Panc1 (cell line): ENCODE measurements at regions of chr4 and their contacts with region 1.

Region 1: DNA sequence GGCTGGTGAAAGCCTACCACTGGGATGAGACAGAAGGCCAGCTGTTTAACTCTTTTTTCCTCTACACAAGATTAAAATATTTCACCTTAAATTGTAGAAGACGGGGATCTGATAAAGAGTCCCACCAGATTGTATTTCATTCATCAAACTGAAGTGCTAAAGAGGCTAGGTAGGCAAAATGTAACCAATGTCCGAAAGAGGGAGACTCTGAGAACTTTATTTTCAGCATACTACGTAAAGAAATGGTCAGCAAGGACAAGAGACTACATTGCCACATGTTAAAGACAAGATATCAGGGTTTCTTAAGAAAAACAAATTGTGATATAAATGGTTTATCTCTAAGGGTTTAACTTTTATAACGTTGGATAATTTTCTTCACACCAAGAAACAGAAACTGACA is 71.6 kb upstream of the INPP4B start:
- DNase-seq: no peak
- ATAC-seq: no peak
- H3K4me3 ChIP-seq: no peak overlapping the region
- H3K27ac ChIP-seq: no peak overlapping the region
- H3K4me1 ChIP-seq: no peaks in the 10 kb centered on the region
- H3K27me3 ChIP-seq: no peaks in the 10 kb centered on the region
- CTCF ChIP-seq: peak; percentile 24; the same call in 1 of the 2 replicates

Region 2: DNA sequence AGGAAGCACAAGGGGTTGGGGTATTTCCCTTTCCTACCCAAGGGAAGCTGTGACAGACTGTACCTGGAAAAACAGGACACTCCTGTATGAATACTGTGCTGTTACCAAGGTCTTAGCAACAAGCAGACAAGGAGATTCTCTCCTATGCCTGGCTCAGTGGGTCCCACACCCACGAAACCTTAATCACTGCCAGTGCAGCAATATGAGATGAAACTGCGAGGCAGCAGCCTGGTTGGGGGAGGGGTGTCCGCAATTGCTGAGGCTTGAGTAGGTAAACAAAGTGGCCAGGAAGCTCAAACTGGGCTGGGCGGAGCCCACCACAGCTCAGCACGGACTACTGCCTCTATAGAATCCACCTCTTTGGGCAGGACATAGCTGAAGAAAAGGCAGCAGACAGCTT is 269.3 kb before region 1 on chr4:
- CTCF ChIA-PET with region 1: no interaction called
- POLR2A ChIA-PET with region 1: interaction called, 11 read pairs
- in situ Hi-C with region 1: no loop called
- intact Hi-C with region 1: no loop called
- DNase-seq: no peak
- ATAC-seq: no peak
- H3K4me3 ChIP-seq: no peak overlapping the region
- H3K27ac ChIP-seq: no peak overlapping the region
- H3K4me1 ChIP-seq: no peaks in the 10 kb centered on the region
- H3K27me3 ChIP-seq: no peaks in the 10 kb centered on the region
- CTCF ChIP-seq: no peak

Region 3: DNA sequence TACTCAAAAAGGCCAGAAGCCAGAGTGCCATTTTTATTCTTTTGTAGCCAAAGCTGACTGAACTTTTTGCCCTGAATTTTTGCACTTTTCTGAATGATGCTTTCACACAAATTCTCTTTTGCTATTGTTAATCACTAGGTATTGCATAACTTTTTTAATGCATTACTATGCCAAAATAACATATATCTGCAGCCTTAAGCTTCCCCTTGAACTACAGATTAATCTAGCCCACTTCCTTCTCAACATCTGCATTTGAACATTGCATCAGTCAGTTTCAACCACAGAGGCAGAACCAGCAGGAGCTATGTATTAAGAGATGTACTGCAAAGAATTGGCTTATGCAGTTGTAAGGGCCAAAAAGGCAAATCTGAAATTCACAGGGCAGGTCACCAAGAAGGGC is 1420.5 kb after region 1 on chr4:
- CTCF ChIA-PET with region 1: no interaction called
- POLR2A ChIA-PET with region 1: no interaction called
- in situ Hi-C with region 1: no loop called
- intact Hi-C with region 1: no loop called
- DNase-seq: no peak
- ATAC-seq: no peak
- H3K4me3 ChIP-seq: no peak overlapping the region
- H3K27ac ChIP-seq: no peak overlapping the region
- H3K4me1 ChIP-seq: no peaks in the 10 kb centered on the region
- H3K27me3 ChIP-seq: no peaks in the 10 kb centered on the region
- CTCF ChIP-seq: no peak